ENCODE measurements at regions of chr3 and their contacts with region 1.

Region 1: DNA sequence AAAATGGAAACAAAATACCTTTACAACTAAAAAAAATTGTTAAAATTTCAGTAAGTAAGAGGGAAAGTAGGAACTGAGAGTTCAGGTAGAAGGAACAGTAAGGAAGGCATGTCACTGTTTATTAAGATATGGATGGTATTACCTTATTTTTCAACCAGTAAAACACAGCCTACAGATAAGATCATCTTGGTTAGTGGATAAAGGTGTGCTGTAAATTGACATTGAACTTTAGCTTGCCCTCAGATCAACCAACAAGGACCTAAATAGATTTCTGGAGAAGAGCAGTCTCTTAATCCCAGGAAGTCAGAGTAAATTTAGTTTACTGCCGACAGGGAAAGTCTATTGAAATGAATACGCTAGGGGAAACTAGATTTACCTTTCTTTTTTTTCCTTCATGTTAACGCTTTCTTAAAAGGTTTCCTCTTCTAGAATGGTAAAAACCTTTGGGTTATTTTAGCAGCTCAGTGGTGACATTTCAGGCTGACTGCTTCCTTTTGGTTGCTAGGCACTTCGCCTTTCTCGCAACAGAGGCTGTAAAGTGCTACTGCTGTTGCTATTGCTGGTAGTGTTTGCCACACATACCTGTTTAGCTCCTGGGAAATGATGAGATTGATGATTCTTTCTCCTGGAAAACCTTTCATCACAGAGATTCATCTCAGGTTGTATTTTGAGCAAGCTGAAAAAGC is 12.9 kb downstream of the DZIP3 start:
- DNase-seq: no peak
- ATAC-seq: peak; percentile 71
- H3K4me3 Mint-ChIP-seq: no peak overlapping the region
- H3K27ac Mint-ChIP-seq: peak overlapping the region; percentile 70
- H3K4me1 Mint-ChIP-seq: peaks cover 23% of the 10 kb centered on the region
- H3K27me3 Mint-ChIP-seq: no peaks in the 10 kb centered on the region
- CTCF ChIP-seq: no peak

Region 2: DNA sequence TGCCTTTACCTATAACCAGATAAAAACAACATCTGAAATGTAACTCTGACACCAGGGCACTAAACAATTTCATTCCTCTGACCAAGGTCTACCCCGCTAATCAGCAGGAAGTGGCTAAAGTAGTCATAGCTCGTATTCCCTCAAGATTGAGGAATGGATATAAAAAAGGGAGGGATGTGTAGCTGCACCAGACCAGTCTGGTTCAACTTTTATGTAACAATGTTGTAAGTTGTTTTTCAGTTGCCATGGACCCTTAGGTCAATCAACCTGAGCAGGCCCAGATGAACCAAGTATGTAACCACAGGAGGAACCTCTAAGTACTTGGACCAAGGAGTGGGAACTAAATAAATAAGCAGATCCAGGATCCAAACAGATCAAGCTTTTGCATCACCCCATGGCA is 351.8 kb before region 1 on chr3:
- CTCF ChIA-PET with region 1: no interaction called
- POLR2A ChIA-PET with region 1: no interaction called
- DNase-seq: no peak
- ATAC-seq: no peak
- H3K4me3 Mint-ChIP-seq: no peak overlapping the region
- H3K27ac Mint-ChIP-seq: no peak overlapping the region
- H3K4me1 Mint-ChIP-seq: no peaks in the 10 kb centered on the region
- H3K27me3 Mint-ChIP-seq: no peaks in the 10 kb centered on the region; the same call in 1 of the 2 replicates
- CTCF ChIP-seq: no peak

Region 3: DNA sequence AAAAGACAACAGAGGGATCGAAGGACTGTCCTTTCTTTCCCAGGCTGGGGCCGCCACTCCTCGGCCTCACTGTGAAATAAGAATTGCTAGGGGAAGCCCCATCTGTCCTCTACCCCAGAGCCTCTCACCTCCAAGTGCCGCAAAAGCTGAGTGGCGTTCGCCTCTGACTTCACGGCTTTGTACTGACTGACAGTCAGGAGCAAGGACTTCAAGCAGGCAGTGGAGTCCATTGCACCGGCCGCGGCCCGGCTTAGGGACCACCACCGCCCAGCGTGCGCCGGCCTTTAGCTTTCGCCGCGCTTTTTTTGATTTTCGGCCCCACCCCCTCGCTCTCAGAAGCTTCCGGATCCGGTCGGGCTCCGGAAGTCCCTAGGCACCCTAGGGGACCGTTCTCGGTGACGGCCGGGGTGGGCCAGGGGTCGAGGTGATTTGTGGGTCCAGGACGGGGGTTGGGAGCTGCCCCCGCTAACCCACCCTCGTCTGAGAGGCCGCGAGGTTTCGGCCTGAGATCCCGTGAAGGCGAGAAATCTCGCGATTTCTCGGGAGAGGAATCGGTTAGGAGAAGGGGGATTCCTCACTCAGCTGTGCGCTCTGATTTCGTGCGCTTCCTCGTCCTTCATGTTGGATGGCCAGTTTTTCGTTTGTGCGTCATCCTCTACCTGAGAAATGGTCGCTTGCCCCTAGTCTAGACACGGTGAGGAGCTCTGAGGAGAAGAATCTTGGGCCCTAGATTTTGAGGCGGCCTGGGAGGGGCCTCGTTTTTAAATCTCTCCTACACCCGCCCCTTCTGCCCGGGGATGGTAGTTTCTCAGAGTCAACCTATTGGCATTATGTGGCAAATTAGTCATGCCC is 13.0 kb before region 1 on chr3 and contains the starts of genes CIP2A and DZIP3:
- CTCF ChIA-PET with region 1: interaction called, 6 read pairs
- POLR2A ChIA-PET with region 1: interaction called, 13 read pairs
- DNase-seq: peak; percentile 97
- ATAC-seq: peak; percentile 99
- H3K4me3 Mint-ChIP-seq: peak within 1 kb of the TSS; percentile 98
- H3K27ac Mint-ChIP-seq: peak within 1 kb of the TSS; percentile 99
- H3K4me1 Mint-ChIP-seq: peaks cover 37% of the 10 kb centered on the region
- H3K27me3 Mint-ChIP-seq: no peaks in the 10 kb centered on the region
- CTCF ChIP-seq: no peak
- total RNA-seq, gene CIP2A: 29.3 to 32.8 TPM (median 32.0 TPM) in 3 replicates
- total RNA-seq, gene DZIP3: 25.3 to 28.7 TPM (median 27.6 TPM) in 3 replicates

Region 4: GRCh38 chr3:108826309-108827187 is 224.2 kb after region 1 on chr3:
- CTCF ChIA-PET with region 1: no interaction called
- POLR2A ChIA-PET with region 1: no interaction called
- DNase-seq: no peak
- ATAC-seq: no peak
- H3K4me3 Mint-ChIP-seq: no peak overlapping the region
- H3K27ac Mint-ChIP-seq: no peak overlapping the region
- H3K4me1 Mint-ChIP-seq: no peaks in the 10 kb centered on the region
- H3K27me3 Mint-ChIP-seq: no peaks in the 10 kb centered on the region
- CTCF ChIP-seq: no peak